ENCODE measurements at regions of chr1 and their contacts with region 1.

Region 1: GRCh38 chr1:204323887-204324286 is 35.8 kb downstream of the PLEKHA6 start:
- DNase-seq: no peak
- ATAC-seq: peak; percentile 63
- H3K4me3 ChIP-seq: no peak overlapping the region
- H3K27ac ChIP-seq: no peak overlapping the region
- H3K4me1 ChIP-seq: no peaks in the 10 kb centered on the region
- H3K27me3 ChIP-seq: peaks cover 0 to 3% of the 10 kb centered on the region in 2 experiments; a peak in 2 of 4 replicates
- CTCF ChIP-seq: no peak
- EP300 ChIP-seq: no peak
- POLR2A ChIP-seq: no peak
- RAD21 ChIP-seq: no peak

Region 2: GRCh38 chr1:204241050-204241449 is 82.8 kb before region 1 on chr1:
- CTCF ChIA-PET with region 1: no interaction called
- POLR2A ChIA-PET with region 1: no interaction called
- RAD21 ChIA-PET with region 1: no interaction called
- SMC1A ChIA-PET with region 1: no interaction called
- in situ Hi-C with region 1: no loop called
- intact Hi-C with region 1: no loop called
- DNase-seq: no peak
- ATAC-seq: no peak; the same call in 2 of the 3 replicates
- H3K4me3 ChIP-seq: no peak overlapping the region
- H3K27ac ChIP-seq: no peak overlapping the region
- H3K4me1 ChIP-seq: no peaks in the 10 kb centered on the region
- H3K27me3 ChIP-seq: peaks cover 0 to 2% of the 10 kb centered on the region in 2 experiments; a peak in 2 of 4 replicates
- CTCF ChIP-seq: no peak
- EP300 ChIP-seq: no peak
- POLR2A ChIP-seq: no peak
- RAD21 ChIP-seq: no peak

Region 3: GRCh38 chr1:204341380-204341779 is 17.5 kb after region 1 on chr1:
- CTCF ChIA-PET with region 1: interaction called, 5 read pairs
- POLR2A ChIA-PET with region 1: interaction called, 4 read pairs
- RAD21 ChIA-PET with region 1: no interaction called
- SMC1A ChIA-PET with region 1: interaction called, 15 read pairs
- in situ Hi-C with region 1: no loop called
- intact Hi-C with region 1: no loop called
- DNase-seq: no peak
- ATAC-seq: no peak
- H3K4me3 ChIP-seq: no peak overlapping the region
- H3K27ac ChIP-seq: no peak overlapping the region
- H3K4me1 ChIP-seq: no peaks in the 10 kb centered on the region
- H3K27me3 ChIP-seq: peaks cover 3 to 7% of the 10 kb centered on the region in 2 experiments
- CTCF ChIP-seq: no peak
- EP300 ChIP-seq: no peak
- POLR2A ChIP-seq: no peak
- RAD21 ChIP-seq: no peak

Measured in GM12878 (cell line).